ENCODE measurements at regions of chr6 and their contacts with region 1.

Region 1: GRCh38 chr6:82363351-82364086 is at the start of gene TPBG:
- DNase-seq: peak; percentile 88
- H3K4me3 ChIP-seq: peak within 1 kb of the TSS; percentile 72 to 99 (median 89)
- H3K27ac ChIP-seq: peak within 1 kb of the TSS; percentile 82
- H3K4me1 ChIP-seq: peaks cover 27% of the 10 kb centered on the region
- H3K27me3 ChIP-seq: no peaks in the 10 kb centered on the region
- CTCF ChIP-seq: peak in 1 of 2 donors; percentile 42
- total RNA-seq, gene TPBG: 62.8 to 115 TPM

Region 2: GRCh38 chr6:81925201-81925600 is 438.3 kb before region 1 on chr6:
- CTCF ChIA-PET with region 1: no interaction called
- dilution Hi-C with region 1: no loop called
- in situ Hi-C with region 1: no loop called
- intact Hi-C with region 1: no loop called
- DNase-seq: no peak
- H3K4me3 ChIP-seq: no peak overlapping the region
- H3K27ac ChIP-seq: no peak overlapping the region
- H3K4me1 ChIP-seq: no peaks in the 10 kb centered on the region
- H3K27me3 ChIP-seq: no peaks in the 10 kb centered on the region
- CTCF ChIP-seq: no peak

Region 3: DNA sequence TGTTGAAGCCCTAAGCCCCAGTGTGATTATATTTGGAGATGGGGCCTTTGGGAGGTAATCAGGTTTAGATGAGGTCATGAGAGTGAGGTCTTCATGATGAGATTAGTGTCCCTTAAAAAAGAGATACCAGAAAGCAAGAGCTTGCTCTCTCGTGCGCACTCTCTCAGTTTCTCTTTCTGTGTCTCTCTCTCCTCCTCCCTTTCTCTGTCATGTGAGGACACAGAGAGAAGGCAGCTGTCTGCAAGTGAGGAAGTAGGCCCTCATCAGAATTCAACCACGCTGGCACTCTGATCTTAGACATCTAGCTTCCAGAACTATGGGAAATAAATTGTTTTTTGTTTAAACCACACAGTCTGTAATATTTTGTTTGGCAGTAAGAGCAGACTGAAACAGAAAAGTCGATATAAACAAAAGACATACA is 296.5 kb before region 1 on chr6:
- CTCF ChIA-PET with region 1: no interaction called
- dilution Hi-C with region 1: no loop called
- in situ Hi-C with region 1: no loop called
- intact Hi-C with region 1: no loop called
- DNase-seq: no peak
- H3K4me3 ChIP-seq: no peak overlapping the region
- H3K27ac ChIP-seq: no peak overlapping the region
- H3K4me1 ChIP-seq: no peaks in the 10 kb centered on the region
- H3K27me3 ChIP-seq: no peaks in the 10 kb centered on the region
- CTCF ChIP-seq: no peak

Region 4: DNA sequence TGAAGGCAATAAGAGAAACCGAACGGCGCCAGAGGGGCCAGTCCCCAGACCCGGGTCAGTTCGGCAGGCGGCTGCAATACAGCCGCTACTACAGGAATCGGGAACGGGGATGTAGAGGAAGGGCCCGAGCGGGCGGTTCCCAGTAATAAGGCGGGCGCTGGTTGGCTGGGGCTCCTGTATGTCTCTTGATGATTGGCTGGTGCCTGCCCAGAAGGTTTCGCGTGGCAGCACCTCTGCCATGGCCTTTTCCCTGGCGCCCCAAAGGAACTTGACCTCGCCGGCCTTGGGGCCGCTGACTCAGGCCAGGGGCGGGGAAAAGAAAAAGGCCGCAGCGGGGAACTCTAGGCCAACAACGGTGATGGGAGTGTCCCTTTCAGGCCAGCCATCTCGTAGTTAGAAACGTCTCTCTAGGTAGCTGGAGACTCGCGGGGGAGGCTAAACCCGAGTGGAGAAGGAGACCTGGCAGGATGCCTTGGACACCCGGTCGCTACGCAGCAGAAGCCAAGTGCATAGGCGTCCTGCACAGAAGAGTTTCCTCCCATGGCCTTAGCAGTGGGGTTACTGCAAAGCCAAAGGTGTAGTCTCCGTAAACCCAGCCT is 115.8 kb before region 1 on chr6 and contains the start of gene IBTK:
- CTCF ChIA-PET with region 1: no interaction called
- dilution Hi-C with region 1: no loop called
- in situ Hi-C with region 1: no loop called
- intact Hi-C with region 1: no loop called
- DNase-seq: peak; percentile 88
- H3K4me3 ChIP-seq: peak within 1 kb of the TSS; percentile 69 to 89 (median 87)
- H3K27ac ChIP-seq: peak within 1 kb of the TSS; percentile 86
- H3K4me1 ChIP-seq: peaks cover 18% of the 10 kb centered on the region
- H3K27me3 ChIP-seq: no peaks in the 10 kb centered on the region
- CTCF ChIP-seq: no peak
- total RNA-seq, gene IBTK: 39.1 to 49.2 TPM

Region 5: DNA sequence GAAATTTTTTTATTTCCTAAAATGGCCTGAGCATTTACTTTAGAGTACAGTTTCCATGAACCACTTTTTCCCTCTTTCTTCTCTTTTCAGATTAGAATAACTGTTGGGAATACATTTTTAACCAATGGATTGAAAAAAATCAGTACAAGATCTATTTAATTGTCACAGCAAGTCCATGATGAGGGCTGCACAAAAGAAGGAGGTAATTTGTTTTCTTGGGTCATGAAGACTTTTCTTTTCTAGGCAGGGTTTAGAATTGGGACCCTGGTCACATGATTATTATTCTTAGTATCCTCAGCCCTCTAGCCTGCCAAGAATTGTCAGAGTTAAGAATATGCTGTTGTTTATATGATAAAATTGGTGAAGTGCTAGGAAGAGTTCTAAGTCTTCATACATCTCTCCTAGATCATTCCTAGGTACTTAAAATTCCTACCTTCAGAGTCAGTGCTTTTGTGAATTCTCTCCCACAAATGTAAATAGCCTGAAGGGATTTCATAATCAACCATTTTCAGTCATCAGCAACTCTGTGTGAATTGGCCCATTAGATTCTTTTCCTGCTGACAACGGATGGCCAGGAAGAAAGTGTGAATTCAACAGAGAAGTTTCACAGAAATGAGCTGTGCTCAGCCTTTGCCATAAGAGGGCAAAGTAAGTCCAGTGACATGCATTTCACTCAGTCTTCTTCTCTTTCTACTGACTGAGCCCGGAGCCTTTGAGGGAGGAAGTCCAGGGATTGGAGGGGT is 32.3 kb before region 1 on chr6:
- CTCF ChIA-PET with region 1: no interaction called
- dilution Hi-C with region 1: no loop called
- in situ Hi-C with region 1: no loop called
- intact Hi-C with region 1: loop called (anchors 2 kb)
- DNase-seq: peak; percentile 92
- H3K4me3 ChIP-seq: no peak overlapping the region
- H3K27ac ChIP-seq: peak overlapping the region; percentile 2
- H3K4me1 ChIP-seq: peaks cover 14% of the 10 kb centered on the region
- H3K27me3 ChIP-seq: no peaks in the 10 kb centered on the region
- CTCF ChIP-seq: peak; percentile 15 to 47

Region 6: GRCh38 chr6:82408952-82409431 is 45.5 kb after region 1 on chr6:
- CTCF ChIA-PET with region 1: no interaction called
- dilution Hi-C with region 1: no loop called
- in situ Hi-C with region 1: no loop called
- intact Hi-C with region 1: loop called (anchors 2 kb)
- DNase-seq: peak; percentile 91
- H3K4me3 ChIP-seq: peak overlapping the region in 1 of 3 experiments; percentile 21
- H3K27ac ChIP-seq: peak overlapping the region; percentile 97
- H3K4me1 ChIP-seq: peaks cover 29% of the 10 kb centered on the region
- H3K27me3 ChIP-seq: no peaks in the 10 kb centered on the region
- CTCF ChIP-seq: no peak

Region 7: DNA sequence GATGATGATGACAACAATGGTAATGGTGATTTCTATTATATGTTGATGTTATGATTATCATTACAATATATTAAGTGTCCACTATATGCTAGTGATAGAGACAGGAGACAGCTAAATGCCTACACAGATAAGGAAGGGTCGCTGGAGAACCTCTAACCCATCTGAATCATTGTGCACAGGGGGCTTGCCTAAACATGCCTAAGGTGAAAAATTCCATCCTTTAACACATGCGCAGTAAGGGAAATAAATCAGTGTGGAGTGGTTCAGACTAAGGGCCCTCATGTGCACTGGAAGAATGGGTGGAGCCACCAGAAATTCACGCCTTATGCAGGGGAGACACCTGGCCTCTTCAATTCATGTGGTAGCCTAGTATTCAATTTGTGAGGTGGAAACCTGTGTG is 120.5 kb after region 1 on chr6:
- CTCF ChIA-PET with region 1: no interaction called
- dilution Hi-C with region 1: no loop called
- in situ Hi-C with region 1: no loop called
- intact Hi-C with region 1: loop called (anchors 5 kb)
- DNase-seq: peak; percentile 17
- H3K4me3 ChIP-seq: no peak overlapping the region
- H3K27ac ChIP-seq: no peak overlapping the region
- H3K4me1 ChIP-seq: peaks cover 6% of the 10 kb centered on the region
- H3K27me3 ChIP-seq: no peaks in the 10 kb centered on the region
- CTCF ChIP-seq: no peak

Region 8: DNA sequence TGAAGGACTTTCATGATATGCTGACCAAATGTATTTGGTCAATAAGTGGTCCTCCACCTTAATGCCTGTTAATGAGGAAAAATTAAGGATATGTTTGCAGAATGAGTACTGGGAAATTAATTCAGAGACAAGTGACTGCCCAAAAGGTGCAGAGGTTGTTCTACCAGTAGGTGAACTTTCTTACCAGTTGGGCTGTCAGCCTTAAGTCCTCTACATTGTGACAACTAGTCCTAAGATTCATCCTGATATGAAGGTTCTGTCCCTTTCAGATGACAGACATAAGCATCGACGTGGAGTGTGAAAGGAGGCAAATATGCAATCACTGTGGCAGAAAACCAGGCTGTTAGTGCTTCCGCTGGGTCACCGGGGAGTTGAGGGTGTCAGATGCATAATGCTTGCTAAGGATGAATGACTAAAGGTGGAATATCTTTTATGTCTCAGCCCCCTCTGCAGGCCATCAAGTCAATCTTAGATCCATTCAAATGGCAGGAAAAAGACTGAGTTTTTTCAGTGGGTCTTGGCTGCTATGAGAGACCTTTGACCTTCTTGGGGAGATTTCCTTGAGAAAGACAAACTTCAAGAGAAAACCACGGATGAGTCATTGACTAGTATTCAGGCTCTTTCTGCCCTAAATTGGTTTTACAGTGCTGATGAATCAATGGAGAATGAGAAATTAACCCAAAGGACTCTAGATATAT is 226.1 kb after region 1 on chr6:
- CTCF ChIA-PET with region 1: interaction called, 3 read pairs
- dilution Hi-C with region 1: no loop called
- in situ Hi-C with region 1: no loop called
- intact Hi-C with region 1: loop called (anchors 2 kb)
- DNase-seq: peak; percentile 58
- H3K4me3 ChIP-seq: no peak overlapping the region
- H3K27ac ChIP-seq: no peak overlapping the region
- H3K4me1 ChIP-seq: peaks cover 2% of the 10 kb centered on the region
- H3K27me3 ChIP-seq: no peaks in the 10 kb centered on the region
- CTCF ChIP-seq: peak; percentile 36 to 41

Region 9: DNA sequence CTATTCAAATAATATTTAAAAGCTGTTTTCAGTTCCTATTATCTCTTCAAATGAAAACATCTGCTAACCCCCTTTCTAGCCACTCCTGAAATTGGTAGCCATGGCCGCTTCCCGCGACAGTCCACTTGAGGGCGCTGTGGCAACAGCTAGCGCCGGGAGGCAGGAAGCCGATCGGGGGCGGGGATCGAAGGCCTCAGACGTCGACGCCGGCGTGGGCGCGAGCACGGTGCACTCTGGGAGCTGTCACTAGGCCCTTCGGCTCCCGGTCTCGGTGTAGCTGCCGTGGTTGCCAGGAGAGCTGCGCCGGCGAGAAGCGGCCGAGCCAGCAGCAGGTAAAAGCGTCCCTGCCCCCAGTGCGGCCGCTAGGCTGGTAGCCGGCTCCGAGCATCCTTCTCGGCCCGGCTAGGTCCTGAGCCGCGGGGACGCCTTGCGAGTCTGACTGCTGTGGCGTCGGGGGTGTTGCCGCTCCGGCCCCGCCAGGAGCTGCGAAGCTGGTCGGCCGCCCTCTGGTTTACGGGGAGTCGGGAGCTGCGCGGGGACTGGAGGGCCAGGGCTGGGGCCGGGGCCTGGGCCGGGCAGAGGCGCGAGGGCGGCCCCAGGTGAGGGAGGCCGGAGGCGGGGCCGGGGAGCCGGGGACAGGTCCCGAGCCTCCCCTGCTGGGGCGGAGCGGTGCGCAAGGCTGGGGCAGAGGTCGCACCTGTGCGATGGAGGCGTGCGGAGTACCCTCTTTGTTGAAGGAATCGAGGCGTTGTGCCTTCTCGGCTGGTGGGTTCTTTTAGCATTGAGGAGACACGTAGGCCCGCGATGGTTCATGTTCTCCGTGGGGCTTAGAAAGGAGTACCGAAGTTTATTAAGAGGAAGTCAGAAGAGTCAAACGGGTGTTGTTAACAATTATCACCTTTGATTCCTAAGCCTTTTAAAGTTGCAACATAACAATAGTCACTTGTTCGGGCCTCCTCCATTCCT is 704.2 kb after region 1 on chr6 and contains the start of gene DOP1A:
- CTCF ChIA-PET with region 1: interaction called, 7 read pairs
- dilution Hi-C with region 1: no loop called
- in situ Hi-C with region 1: loop called in 1 of 2 experiments (anchors 10 kb)
- intact Hi-C with region 1: no loop called
- DNase-seq: peak; percentile 91
- H3K4me3 ChIP-seq: peak within 1 kb of the TSS; percentile 92 to 96 (median 94)
- H3K27ac ChIP-seq: peak within 1 kb of the TSS; percentile 65
- H3K4me1 ChIP-seq: peaks cover 34% of the 10 kb centered on the region
- H3K27me3 ChIP-seq: no peaks in the 10 kb centered on the region
- CTCF ChIP-seq: peak; percentile 91 to 98
- total RNA-seq, gene DOP1A: 24.3 to 74.3 TPM

Measured in mammary epithelial cell (primary cell).